IMR-90 (cell line): ENCODE measurements at regions of chrX and their contacts with region 1.

Region 1: DNA sequence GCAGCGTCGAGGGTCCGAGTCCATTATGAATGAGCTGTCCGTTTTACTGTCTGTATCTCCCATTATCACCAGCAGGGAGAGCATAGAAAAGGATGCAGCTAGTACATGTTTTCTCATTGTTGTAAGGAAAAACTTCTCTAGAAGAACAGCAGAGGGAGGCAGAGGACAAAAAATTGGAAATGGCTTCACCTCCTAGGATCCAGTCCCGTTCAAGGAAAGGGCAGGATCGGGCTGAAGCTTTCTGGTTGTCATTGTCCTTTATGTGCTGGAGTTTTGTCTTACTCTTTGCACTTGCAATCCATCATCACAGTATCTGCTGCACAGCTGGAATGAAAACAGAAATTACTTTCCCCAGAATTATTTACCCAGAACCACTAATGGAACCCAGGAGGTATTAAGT is 14.7 kb downstream of the NDP start:
- DNase-seq: peak; percentile 83
- ATAC-seq: peak; percentile 98
- H3K4me3 ChIP-seq: no peak overlapping the region
- H3K27ac ChIP-seq: no peak overlapping the region
- H3K4me1 ChIP-seq: no peaks in the 10 kb centered on the region
- H3K27me3 ChIP-seq: peaks cover 7% of the 10 kb centered on the region
- CTCF ChIP-seq: peak; percentile 95
- POLR2A ChIP-seq: no peak; the same call in 1 of the 2 replicates
- RAD21 ChIP-seq: peak; percentile 91

Region 2: GRCh38 chrX:44017676-44018075 is 59.1 kb after region 1 on chrX:
- CTCF ChIA-PET with region 1: no interaction called
- POLR2A ChIA-PET with region 1: no interaction called
- dilution Hi-C with region 1: no loop called
- in situ Hi-C with region 1: no loop called
- intact Hi-C with region 1: no loop called
- DNase-seq: no peak
- ATAC-seq: no peak
- H3K4me3 ChIP-seq: no peak overlapping the region
- H3K27ac ChIP-seq: no peak overlapping the region
- H3K4me1 ChIP-seq: no peaks in the 10 kb centered on the region
- H3K27me3 ChIP-seq: no peaks in the 10 kb centered on the region; the same call in 1 of the 2 replicates
- CTCF ChIP-seq: no peak
- POLR2A ChIP-seq: no peak
- RAD21 ChIP-seq: no peak

Region 3: DNA sequence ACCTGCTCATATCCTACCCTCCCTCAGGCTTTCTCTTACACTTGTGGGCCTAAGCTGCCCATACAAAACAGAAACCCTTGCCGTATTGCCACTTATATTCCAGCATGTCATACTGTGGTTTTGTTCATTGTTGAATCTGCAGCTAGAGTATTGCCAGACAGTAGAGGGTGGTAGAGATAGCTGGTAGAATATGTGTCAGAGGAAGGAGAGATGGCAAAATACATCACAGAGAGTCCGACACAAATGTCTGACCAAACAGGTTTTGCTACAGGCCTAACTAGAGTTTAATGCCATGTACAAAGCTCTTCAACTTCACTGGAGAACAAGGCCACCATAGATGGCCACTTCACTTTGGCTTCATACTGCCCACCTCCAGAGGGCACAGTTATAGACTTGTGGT is 224.8 kb after region 1 on chrX:
- CTCF ChIA-PET with region 1: no interaction called
- POLR2A ChIA-PET with region 1: no interaction called
- dilution Hi-C with region 1: no loop called
- in situ Hi-C with region 1: no loop called
- intact Hi-C with region 1: no loop called
- DNase-seq: no peak
- ATAC-seq: no peak
- H3K4me3 ChIP-seq: no peak overlapping the region
- H3K27ac ChIP-seq: no peak overlapping the region
- H3K4me1 ChIP-seq: no peaks in the 10 kb centered on the region
- H3K27me3 ChIP-seq: peaks cover 2% of the 10 kb centered on the region; the same call in 1 of the 2 replicates
- CTCF ChIP-seq: no peak
- POLR2A ChIP-seq: no peak
- RAD21 ChIP-seq: no peak

Region 4: DNA sequence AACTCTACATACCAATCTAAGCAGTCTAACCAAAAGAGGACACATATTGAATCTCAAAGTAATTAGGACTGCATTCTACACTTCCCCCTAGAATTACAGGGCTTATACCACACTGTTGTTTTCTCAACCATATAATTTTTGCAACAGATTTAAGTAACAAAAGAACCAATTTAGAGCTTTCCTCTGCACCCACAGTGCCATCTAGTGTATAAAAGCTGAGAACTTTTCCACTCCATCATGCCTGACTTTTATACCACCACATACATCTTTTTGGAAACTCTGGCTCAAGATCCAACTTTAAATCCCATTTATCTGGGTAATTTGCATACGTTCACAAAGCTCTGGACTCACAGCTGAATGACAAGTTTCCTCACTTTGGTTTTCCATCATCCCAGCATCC is 285.5 kb after region 1 on chrX:
- CTCF ChIA-PET with region 1: interaction called, 8 read pairs
- POLR2A ChIA-PET with region 1: no interaction called
- dilution Hi-C with region 1: no loop called
- in situ Hi-C with region 1: loop called (anchors 5 kb)
- intact Hi-C with region 1: loop called (anchors 1 kb)
- DNase-seq: peak; percentile 29
- ATAC-seq: peak; percentile 75
- H3K4me3 ChIP-seq: no peak overlapping the region
- H3K27ac ChIP-seq: no peak overlapping the region
- H3K4me1 ChIP-seq: no peaks in the 10 kb centered on the region
- H3K27me3 ChIP-seq: peaks cover 3% of the 10 kb centered on the region
- CTCF ChIP-seq: peak; percentile 51
- POLR2A ChIP-seq: no peak
- RAD21 ChIP-seq: peak; percentile 53

Region 5: DNA sequence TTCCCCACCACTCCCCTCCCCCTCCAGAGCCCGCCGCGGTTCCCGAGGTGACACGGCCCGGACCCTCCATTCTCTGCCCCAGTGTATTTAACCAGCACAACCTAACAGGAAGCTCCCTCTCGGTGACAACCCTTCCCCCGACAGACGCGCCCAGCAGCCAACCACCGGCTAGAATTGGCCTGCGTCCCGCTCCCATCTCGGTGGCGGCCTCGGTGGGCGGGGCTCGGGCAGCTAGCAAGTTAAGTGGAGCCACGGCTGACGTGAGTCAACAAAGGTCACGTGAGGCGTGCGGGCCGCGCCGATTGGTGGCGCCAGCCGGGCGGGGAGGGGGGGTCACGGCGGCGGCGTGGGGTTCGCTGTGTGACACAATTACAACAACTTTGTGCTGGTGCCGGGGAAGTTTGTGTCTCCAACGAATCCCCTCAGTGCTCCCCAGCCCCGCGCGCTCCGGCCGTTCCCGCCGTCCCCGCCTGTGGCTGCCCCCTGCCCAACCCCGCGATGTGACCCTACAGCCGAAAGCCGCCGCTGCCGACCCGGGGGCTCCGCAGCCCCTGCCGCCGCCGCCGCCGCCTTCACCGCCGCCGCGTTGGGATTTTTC is 914.4 kb after region 1 on chrX and contains the start of gene KDM6A:
- CTCF ChIA-PET with region 1: no interaction called
- POLR2A ChIA-PET with region 1: no interaction called
- dilution Hi-C with region 1: no loop called
- in situ Hi-C with region 1: no loop called
- intact Hi-C with region 1: loop called (anchors 10 kb)
- DNase-seq: peak; percentile 96
- ATAC-seq: peak; percentile 90
- H3K4me3 ChIP-seq: peak within 1 kb of the TSS; percentile 93
- H3K27ac ChIP-seq: peak within 1 kb of the TSS; percentile 89
- H3K4me1 ChIP-seq: no peaks in the 10 kb centered on the region
- H3K27me3 ChIP-seq: no peaks in the 10 kb centered on the region
- CTCF ChIP-seq: no peak
- POLR2A ChIP-seq: peak; percentile 69
- RAD21 ChIP-seq: no peak
- total RNA-seq, gene KDM6A: 24.9 and 25.3 TPM in 2 replicates

Region 6: DNA sequence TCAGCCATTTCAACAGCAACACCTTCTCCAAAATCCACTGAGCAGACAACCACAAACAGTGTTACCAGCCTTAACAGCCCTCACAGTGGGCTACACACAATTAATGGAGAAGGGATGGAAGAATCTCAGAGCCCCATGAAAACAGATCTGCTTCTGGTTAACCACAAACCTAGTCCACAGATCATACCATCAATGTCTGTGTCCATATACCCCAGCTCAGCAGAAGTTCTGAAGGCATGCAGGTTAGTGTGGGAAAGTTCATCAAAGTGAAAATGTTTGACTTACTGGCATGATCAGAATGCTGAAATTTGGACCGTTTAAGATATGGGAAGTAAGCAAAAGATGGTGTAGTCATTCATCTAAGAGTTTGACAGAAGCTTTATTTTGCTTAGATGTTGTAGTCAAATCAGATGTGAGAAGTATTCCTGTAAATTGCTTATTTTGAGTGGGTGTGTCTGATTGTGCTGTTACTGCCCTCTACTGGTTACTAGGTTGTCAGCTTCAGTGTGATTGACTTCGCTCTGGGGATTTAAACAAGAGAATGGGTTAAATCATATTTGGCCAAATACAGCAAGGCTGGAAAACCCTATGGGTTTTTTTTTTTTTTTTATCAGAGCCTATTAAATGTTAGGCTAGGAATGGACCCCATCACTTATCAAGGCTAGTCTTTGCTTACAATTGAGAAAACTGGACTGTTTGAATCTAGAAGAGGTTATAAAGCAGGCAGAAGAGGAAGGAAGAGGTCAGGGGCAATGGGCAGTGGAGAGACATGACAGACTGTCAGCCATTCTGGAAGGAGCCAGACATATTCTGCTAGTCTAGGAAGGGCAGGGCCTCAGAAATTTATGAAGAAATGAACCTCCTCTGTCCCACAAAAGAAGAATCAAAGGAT is 1111.8 kb after region 1 on chrX:
- CTCF ChIA-PET with region 1: no interaction called
- POLR2A ChIA-PET with region 1: no interaction called
- dilution Hi-C with region 1: no loop called
- in situ Hi-C with region 1: loop called (anchors 25 kb)
- intact Hi-C with region 1: no loop called
- DNase-seq: peak; percentile 67
- ATAC-seq: peak; percentile 78
- H3K4me3 ChIP-seq: no peak overlapping the region
- H3K27ac ChIP-seq: no peak overlapping the region
- H3K4me1 ChIP-seq: no peaks in the 10 kb centered on the region
- H3K27me3 ChIP-seq: no peaks in the 10 kb centered on the region
- CTCF ChIP-seq: peak; percentile 67
- POLR2A ChIP-seq: no peak
- RAD21 ChIP-seq: peak; percentile 67